Right ventricle myocardium inferior (tissue), 1 donor: ENCODE measurements at regions of chr7 and their contacts with region 1.

Region 1: DNA sequence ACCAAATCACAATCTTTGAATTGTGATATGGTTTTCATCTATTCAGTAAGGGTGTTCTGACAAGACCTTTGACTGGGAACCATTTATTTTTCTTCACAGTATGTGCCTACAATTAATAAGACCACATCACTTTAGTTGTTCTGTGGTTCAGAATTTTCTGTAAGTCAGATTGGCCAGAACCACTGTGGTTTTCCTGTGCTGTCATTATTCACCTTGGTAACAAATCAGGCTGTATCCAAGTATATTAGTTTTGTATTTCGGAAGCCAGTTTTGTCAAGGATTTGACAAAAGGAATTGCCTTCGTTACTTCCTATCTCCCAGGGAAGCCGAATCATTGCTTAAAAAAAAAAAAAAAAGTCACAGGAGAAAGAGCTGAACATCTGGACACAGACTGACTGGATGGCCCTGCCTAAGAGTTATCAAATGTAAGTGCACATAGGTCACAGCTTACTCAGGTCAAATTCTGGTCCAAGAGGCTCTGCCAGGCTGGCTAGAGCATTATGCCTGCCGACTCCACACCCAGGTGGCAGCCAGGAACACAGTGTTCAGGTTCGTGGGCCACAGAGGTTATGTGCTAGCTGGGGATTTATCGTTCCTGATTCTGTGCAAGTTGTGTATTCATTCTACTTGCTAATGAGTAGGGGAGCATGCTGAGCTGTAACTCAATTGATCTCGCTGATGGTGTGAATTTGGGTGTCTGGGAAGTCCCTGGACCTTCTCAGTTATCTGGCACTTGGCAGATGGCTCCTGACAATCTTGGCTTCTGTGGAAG is 175.3 kb downstream of the JAZF1 start:
- DNase-seq: no peak
- ATAC-seq: peak; percentile 95

Region 2: GRCh38 chr7:27947586-27948278 is 57.5 kb before region 1 on chr7:
- intact Hi-C with region 1: loop called (anchors 5 kb)
- DNase-seq: no peak
- ATAC-seq: no peak

Region 3: DNA sequence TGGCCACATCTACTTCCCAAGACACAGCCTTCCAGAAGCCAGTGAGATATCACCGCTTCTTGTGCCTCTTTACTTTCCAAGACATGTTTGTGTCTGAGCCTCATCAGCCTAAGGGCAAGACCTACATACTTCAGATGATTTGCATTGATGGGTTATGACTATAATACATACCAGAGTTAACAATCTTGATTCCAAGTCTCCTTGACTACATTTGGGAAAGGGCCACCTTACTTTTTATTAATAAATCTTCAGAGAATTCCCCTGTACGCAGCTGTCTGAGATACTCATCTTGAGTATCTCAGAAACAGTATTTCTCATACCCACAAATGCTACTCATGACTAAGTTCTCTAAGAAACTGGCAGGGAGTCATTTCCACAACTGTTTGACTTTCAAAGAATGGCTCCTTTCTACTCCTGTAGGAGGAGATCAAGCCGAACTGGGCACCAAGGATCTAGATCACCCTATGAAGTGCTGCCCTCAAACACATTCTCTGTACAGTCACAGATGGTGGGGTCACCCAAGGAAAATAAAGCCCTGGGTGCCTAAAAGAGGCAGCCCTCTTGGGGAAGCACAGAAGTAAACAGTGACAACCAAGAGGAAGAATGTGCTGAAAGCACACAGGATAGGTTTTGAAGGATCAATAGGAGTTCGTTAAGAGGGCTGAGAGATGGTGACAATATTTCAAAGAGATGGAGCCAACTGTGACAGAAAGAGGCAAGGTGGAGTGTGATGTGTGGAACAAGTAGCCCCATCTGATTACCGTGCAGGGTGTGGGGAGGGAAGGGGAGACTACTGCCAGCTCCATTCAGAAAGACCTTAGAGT is 36.4 kb after region 1 on chr7:
- intact Hi-C with region 1: no loop called
- DNase-seq: no peak
- ATAC-seq: no peak